ENCODE measurements at regions of chr3 and their contacts with region 1.

Region 1: DNA sequence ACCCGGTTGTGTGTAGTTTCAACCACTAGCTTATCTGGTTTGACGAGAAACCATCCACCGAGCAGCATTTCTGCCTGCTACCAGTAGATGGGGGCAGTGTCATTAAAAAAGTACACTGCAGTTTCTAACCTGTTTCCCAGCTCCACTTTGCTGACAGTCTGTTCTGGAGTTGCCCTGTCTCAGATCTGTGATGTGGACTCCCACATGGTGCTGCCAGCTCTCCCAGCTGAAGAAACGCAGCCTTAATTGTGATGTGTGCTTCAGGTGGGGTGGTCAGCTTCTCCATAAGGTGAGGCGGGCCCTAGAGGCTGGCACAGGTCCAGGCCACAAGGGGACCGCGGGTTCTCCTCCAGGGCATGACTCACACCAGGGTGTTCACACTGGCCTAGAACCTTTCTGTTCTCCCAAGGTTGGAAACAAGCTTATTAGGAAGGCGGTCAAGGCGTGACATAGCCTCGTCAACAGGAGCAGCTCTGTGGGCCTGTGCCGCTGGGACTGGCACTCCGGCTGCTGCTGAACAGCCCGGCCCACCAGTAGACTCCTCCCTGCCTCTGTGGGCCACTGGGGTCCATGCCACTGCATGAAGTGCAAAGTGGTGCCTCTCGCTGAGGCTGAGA is 2.9 kb upstream of the FAM43A start:
- DNase-seq: peak; percentile 82 to 94
- H3K4me3 ChIP-seq: no peak overlapping the region
- H3K27ac ChIP-seq: 0 out of 2 replicates have a peak overlapping the region, but pooled peaks have one; percentile 13
- H3K4me1 ChIP-seq: peaks cover 19% of the 10 kb centered on the region
- H3K27me3 ChIP-seq: no peaks in the 10 kb centered on the region
- CTCF ChIP-seq: peak; percentile 81

Region 2: DNA sequence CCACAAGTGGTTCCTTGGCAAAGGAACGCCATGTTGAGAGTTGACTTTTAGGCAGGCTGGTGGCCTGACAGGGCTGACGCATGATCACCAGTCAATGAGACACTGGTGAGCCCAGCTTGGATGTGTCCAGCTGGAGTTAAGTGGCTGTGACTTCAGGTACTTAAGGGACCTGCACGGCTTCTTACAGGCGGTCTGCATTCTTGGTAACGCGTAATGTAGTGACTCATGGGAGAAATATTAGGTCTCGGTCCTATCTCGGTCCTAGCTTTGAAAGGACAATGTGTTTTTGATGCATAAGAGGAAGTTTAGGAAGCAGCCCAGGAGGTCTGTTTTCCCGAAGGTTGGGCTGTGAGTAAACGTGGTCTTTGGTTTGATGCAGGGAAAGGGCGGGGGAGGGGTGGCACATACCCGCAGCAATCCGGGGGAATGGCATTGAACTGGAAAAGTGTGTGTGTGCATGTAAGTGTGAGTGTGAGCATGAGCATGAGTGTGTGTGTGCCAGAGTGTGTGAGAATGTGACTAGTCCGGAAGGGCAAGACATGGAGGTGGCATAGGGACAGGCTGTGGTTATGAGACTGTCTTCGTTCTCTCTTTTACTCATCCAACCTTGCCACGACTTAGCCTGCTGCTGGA is 58.2 kb after region 1 on chr3:
- CTCF ChIA-PET with region 1: interaction called, 3 read pairs
- POLR2A ChIA-PET with region 1: interaction called, 8 read pairs
- intact Hi-C with region 1: loop called (anchors 1 kb)
- DNase-seq: peak; percentile 86 to 100
- H3K4me3 ChIP-seq: peak overlapping the region; percentile 30; the same call in 1 of the 2 replicates
- H3K27ac ChIP-seq: peak overlapping the region; percentile 80
- H3K4me1 ChIP-seq: peaks cover 42% of the 10 kb centered on the region
- H3K27me3 ChIP-seq: no peaks in the 10 kb centered on the region
- CTCF ChIP-seq: no peak

Region 3: DNA sequence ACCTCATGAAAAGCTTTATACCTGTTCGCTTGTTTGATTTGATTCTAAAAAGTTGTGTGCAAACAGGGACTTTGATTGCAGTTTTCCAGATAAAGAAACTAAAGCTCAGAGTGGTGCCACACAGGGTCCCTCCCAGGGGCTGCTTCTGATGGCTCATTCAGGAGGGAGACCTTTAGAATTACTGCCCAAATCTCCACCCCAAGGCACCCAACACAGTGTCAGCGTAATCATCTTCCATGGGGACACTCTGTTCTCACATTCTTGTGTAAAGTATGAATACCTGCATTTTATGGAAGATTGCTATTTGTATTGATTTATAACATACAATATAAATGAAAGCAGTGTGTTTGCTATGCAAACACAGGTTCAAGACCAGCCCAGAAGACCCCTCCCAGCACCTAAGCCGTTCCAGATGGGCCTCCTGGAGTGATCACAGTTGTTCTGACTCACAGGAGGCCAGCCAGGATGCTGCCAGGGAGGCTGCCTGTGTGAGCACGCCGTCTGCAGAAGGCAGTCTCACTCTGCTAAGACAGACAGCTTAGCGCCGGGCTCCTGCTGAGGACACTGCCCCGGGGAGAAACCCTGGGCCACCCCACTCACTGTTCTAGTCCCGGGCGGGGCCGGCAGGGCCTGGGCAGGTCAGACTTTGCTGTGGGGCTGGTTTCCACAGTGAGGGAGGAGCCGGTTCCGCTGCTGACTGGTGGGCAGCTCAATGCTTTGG is 188.5 kb after region 1 on chr3:
- CTCF ChIA-PET with region 1: interaction called, 12 read pairs
- POLR2A ChIA-PET with region 1: interaction called, 3 read pairs
- intact Hi-C with region 1: loop called (anchors 1 kb)
- DNase-seq: peak; percentile 83 to 94
- H3K4me3 ChIP-seq: peak overlapping the region; percentile 14; the same call in 1 of the 2 replicates
- H3K27ac ChIP-seq: peak overlapping the region; percentile 91
- H3K4me1 ChIP-seq: peaks cover 50% of the 10 kb centered on the region
- H3K27me3 ChIP-seq: no peaks in the 10 kb centered on the region
- CTCF ChIP-seq: peak; percentile 20; the same call in 1 of the 2 replicates

Region 4: DNA sequence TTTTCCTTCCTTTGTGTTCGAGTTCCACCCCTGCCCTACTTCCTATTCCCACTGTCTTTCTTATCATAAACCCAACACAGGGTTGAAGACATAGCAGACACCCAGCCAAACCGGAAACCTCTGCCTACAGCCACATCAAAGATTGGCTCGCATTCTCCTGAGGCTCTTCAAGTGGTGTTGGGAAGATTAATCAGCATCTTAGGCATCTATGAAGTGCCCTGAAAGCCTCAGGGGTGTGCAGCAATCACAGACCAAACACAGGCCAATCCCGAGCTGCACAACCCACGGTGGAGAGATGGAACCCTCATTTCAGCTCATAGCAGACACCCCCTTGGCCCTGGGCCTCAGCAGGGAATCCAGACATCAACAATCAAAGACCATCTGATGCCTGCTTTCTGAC is 332.2 kb after region 1 on chr3:
- CTCF ChIA-PET with region 1: no interaction called
- POLR2A ChIA-PET with region 1: no interaction called
- intact Hi-C with region 1: loop called (anchors 1 kb)
- DNase-seq: peak in 1 of 2 experiments; percentile 78
- H3K4me3 ChIP-seq: no peak overlapping the region
- H3K27ac ChIP-seq: no peak overlapping the region
- H3K4me1 ChIP-seq: peaks cover 36% of the 10 kb centered on the region
- H3K27me3 ChIP-seq: no peaks in the 10 kb centered on the region; the same call in 1 of the 2 replicates
- CTCF ChIP-seq: no peak

Region 5: GRCh38 chr3:195117978-195118581 is 435.3 kb after region 1 on chr3:
- CTCF ChIA-PET with region 1: interaction called, 4 read pairs
- POLR2A ChIA-PET with region 1: interaction called, 6 read pairs
- intact Hi-C with region 1: loop called (anchors 1 kb)
- DNase-seq: peak; percentile 94 to 97
- H3K4me3 ChIP-seq: peak overlapping the region; percentile 23; the same call in 1 of the 2 replicates
- H3K27ac ChIP-seq: peak overlapping the region; percentile 82
- H3K4me1 ChIP-seq: peaks cover 51% of the 10 kb centered on the region
- H3K27me3 ChIP-seq: no peaks in the 10 kb centered on the region
- CTCF ChIP-seq: peak; percentile 63

Region 6: DNA sequence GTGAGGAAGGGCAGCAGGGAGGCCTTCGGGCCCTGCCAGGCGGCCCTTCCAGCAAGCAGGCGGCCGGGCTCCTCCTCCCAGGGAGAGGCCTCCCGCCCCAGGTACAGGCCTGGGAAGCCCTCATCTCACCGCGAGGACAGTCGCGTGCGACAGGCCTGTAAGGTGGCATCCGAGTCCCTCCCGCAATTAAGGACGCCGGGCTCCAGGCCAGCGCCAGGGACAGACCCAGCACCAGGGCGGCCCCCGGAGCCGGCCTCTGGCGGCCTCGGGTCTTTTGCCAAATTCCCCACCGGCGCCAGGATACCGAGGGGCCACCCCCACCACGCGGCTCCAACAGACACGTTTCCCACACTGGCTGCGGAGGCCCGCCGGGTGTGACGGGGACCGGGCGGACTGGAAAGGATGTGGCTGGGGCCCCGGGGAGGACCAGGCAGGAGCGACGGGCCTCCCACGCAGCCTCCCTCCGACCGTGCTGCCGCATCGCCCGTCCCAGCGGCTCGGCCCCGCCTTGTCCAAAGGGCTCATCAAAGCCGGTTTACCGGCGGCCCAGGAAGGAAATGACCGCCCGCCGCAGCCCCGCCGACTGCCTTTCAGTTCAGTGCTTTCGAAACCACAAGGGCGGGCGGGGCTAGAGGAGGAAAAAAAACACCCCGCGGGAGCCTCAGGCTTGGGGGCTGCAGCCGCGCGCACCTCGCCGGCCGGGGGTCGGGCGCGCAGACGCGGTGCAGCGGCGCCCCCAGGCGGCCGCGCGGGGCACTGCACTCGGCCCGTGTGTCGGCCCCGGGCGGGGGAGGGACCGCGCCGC is 576.9 kb after region 1 on chr3:
- CTCF ChIA-PET with region 1: interaction called, 7 read pairs
- POLR2A ChIA-PET with region 1: interaction called, 6 read pairs
- intact Hi-C with region 1: loop called (anchors 1 kb)
- DNase-seq: peak; percentile 86 to 96
- H3K4me3 ChIP-seq: peak overlapping the region; percentile 70
- H3K27ac ChIP-seq: peak overlapping the region; percentile 74
- H3K4me1 ChIP-seq: peaks cover 13% of the 10 kb centered on the region
- H3K27me3 ChIP-seq: no peaks in the 10 kb centered on the region
- CTCF ChIP-seq: no peak

Measured in PC-9 (cell line).